Activated B cell treated with CpG ODN at 0.5 μM for 24 hours (primary cell): ENCODE measurements at regions of chr1 and their contacts with region 1.

Region 1: DNA sequence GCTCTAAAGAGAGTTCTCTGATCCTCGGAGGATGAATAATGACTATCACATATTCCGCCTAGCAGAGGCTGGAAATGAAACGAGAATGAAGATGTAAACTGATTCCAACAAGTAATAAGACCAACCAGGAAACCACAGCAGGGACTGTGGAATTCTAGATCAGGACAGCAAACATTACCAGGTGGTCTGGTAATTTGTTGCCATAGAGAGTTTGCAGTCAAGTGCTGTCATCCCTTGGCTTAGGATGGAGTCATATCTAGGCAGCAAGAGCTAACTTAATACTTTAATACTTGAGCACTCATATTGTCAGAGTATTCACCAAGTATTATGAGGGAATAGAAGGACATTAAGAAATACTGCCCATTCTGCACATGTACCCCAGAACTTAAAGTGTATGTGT is 45.1 kb upstream of the MUTYH start:
- DNase-seq: no peak
- ATAC-seq: no peak
- H3K4me3 Mint-ChIP-seq: no peak overlapping the region
- H3K27ac Mint-ChIP-seq: no peak overlapping the region
- H3K4me1 Mint-ChIP-seq: no peaks in the 10 kb centered on the region
- H3K27me3 Mint-ChIP-seq: no peaks in the 10 kb centered on the region
- CTCF ChIP-seq: no peak

Region 2: GRCh38 chr1:45051005-45051772 is 334.1 kb before region 1 on chr1:
- CTCF ChIA-PET with region 1: no interaction called
- POLR2A ChIA-PET with region 1: no interaction called
- intact Hi-C with region 1: no loop called
- DNase-seq: no peak
- ATAC-seq: peak; percentile 42
- H3K4me3 Mint-ChIP-seq: peak overlapping the region; percentile 64
- H3K27ac Mint-ChIP-seq: peak overlapping the region; percentile 87
- H3K4me1 Mint-ChIP-seq: peaks cover 30% of the 10 kb centered on the region
- H3K27me3 Mint-ChIP-seq: no peaks in the 10 kb centered on the region
- CTCF ChIP-seq: no peak

Region 3: GRCh38 chr1:45272983-45273382 is 112.3 kb before region 1 on chr1:
- CTCF ChIA-PET with region 1: no interaction called
- POLR2A ChIA-PET with region 1: no interaction called
- intact Hi-C with region 1: no loop called
- DNase-seq: no peak
- ATAC-seq: no peak
- H3K4me3 Mint-ChIP-seq: no peak overlapping the region
- H3K27ac Mint-ChIP-seq: no peak overlapping the region
- H3K4me1 Mint-ChIP-seq: no peaks in the 10 kb centered on the region
- H3K27me3 Mint-ChIP-seq: no peaks in the 10 kb centered on the region
- CTCF ChIP-seq: no peak

Region 4: GRCh38 chr1:45365051-45365450 is 20.3 kb before region 1 on chr1:
- CTCF ChIA-PET with region 1: interaction called, 3 read pairs
- POLR2A ChIA-PET with region 1: interaction called, 13 read pairs
- intact Hi-C with region 1: no loop called
- DNase-seq: no peak
- ATAC-seq: peak; percentile 81
- H3K4me3 Mint-ChIP-seq: no peak overlapping the region
- H3K27ac Mint-ChIP-seq: peak overlapping the region; percentile 75
- H3K4me1 Mint-ChIP-seq: peaks cover 19% of the 10 kb centered on the region
- H3K27me3 Mint-ChIP-seq: no peaks in the 10 kb centered on the region
- CTCF ChIP-seq: no peak

Region 5: GRCh38 chr1:45608175-45609156 is 223.2 kb after region 1 on chr1:
- CTCF ChIA-PET with region 1: no interaction called
- POLR2A ChIA-PET with region 1: no interaction called
- intact Hi-C with region 1: no loop called
- DNase-seq: no peak
- ATAC-seq: peak; percentile 69
- H3K4me3 Mint-ChIP-seq: peak overlapping the region; percentile 4
- H3K27ac Mint-ChIP-seq: peak overlapping the region; percentile 72
- H3K4me1 Mint-ChIP-seq: peaks cover 38% of the 10 kb centered on the region
- H3K27me3 Mint-ChIP-seq: no peaks in the 10 kb centered on the region
- CTCF ChIP-seq: no peak